Activated B cell treated with CpG ODN at 0.5 μM for 24 hours (primary cell): ENCODE measurements at regions of chr5 and their contacts with region 1.

Region 1: DNA sequence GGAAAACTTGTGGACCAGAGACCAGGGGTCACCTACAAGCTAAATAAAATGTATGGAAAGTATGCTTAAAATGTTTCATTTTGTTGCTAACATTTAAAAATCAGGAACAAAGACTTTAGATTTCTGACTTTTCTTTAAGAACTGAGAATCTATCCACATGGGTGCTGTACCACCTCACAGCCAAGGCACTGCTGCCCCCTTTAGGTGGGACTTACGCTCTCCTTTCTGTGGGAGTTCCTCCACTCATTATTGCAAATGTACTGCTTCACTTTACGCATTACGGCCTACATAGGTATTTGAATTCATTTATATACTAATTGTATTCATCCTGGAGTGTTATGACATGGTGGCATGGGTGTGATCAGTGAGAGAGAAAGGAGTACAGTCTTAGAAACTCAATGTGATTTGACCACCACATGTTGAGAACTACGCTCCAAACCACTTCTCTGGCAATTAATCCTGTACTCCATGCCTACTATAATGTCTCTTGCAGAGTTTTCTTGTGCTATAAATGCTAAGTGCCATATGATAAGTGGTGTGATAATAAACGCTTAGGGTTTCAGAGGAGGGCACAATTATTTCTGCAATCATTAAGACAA is 24.7 kb upstream of the CETN3 start:
- DNase-seq: no peak
- ATAC-seq: peak; percentile 66
- H3K4me3 Mint-ChIP-seq: no peak overlapping the region
- H3K27ac Mint-ChIP-seq: no peak overlapping the region
- H3K4me1 Mint-ChIP-seq: no peaks in the 10 kb centered on the region
- H3K27me3 Mint-ChIP-seq: peaks cover 5% of the 10 kb centered on the region
- CTCF ChIP-seq: no peak

Region 2: DNA sequence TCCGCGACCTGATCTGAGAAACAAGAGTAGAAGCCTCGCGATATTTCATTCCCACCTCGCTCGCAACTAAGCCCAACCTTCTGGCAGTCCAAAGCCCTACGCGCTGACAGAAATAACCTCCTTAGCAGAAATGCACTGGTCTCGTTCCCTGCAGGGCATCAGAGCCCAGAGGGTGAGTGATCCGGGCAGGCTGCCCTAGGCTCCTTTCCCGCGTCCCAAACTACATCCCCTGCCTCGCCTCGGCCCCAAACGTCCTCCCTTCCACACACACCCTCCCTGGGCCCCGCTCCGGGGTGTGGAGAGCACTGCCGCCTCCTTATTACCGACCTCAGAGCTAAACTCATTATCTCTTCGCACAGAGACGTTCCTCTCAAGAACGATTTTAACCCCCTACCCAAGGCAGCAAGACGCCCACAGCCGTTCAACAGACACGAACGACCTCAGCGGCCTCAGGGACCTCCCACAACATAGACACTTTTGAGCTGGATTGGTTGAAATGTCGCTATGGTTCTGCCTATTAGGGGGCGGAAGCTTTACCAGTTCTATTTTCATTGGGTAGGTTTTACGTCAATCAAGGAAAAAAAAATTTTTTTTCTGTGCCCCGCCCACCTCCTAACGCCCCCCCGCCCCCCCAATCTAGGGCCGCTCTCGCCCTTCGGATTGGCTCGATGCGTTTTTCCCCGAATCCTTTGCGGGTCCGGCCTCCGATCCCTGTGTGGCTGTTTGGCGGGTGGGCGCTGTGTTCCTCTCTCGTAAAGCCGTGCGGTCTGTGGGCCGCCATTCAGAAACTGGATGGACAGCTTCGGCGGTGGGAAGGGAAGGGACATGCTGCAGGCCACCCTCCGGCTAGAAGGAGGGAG is 24.7 kb before region 1 on chr5 and contains the start of gene CETN3:
- CTCF ChIA-PET with region 1: no interaction called
- POLR2A ChIA-PET with region 1: interaction called, 6 read pairs
- intact Hi-C with region 1: loop called (anchors 2 kb)
- DNase-seq: peak; percentile 79
- ATAC-seq: peak; percentile 93
- H3K4me3 Mint-ChIP-seq: no peak within 1 kb of the TSS
- H3K27ac Mint-ChIP-seq: no peak within 1 kb of the TSS
- H3K4me1 Mint-ChIP-seq: peaks cover 11% of the 10 kb centered on the region
- H3K27me3 Mint-ChIP-seq: no peaks in the 10 kb centered on the region
- CTCF ChIP-seq: no peak
- total RNA-seq, gene CETN3: 19.1 and 20.3 TPM in 2 replicates

Region 3: DNA sequence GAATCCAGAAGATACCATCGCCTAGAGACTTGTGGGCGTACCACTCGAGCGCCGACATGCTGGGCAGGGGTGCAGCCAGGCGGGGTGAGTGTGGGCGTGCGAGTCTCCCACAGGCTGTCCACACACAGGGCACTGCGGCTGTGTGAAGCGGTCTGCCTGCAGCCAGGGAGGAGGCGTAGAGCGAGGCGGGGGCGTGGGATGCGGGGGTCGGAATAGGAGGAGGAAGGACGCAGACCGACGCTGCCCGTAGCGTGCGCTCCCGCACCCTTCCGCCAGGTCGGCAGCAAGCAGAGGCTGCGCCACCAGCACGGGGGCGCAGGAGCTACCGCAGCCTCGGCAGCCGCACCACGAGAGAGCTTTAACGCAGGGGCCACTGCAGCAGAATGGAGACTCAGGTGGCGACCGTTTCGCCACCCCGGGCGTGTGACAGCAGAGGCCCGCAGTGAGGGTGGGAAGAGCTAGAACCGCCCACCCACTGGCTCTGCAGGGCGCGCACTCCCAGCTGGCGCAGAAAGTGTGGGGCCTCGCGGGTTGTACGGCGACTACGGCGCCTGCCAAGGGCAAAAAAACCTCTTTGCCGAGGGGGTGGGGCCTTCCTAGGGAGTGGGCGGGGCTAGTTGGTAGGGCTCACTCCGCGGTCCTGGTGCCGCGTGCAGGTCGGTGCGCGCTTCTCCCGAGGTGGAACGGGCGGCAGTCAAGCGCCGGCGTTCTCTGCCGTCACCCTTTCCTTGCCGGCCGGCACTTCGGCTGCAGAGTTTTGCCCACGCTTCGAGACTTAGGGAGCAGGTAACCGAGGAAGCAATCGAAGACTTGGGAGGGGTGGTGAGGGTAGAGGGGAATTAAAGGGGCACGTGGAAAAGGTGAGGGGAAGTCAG is 40.3 kb after region 1 on chr5 and contains the starts of genes MBLAC2 and POLR3G:
- CTCF ChIA-PET with region 1: interaction called, 3 read pairs
- POLR2A ChIA-PET with region 1: interaction called, 4 read pairs
- intact Hi-C with region 1: loop called (anchors 1 kb)
- DNase-seq: peak; percentile 86
- ATAC-seq: peak; percentile 91
- H3K4me3 Mint-ChIP-seq: peak within 1 kb of the TSS; percentile 98
- H3K27ac Mint-ChIP-seq: peak within 1 kb of the TSS; percentile 93
- H3K4me1 Mint-ChIP-seq: peaks cover 27% of the 10 kb centered on the region
- H3K27me3 Mint-ChIP-seq: no peaks in the 10 kb centered on the region
- CTCF ChIP-seq: no peak
- total RNA-seq, gene MBLAC2: 6.4 and 7.3 TPM in 2 replicates
- total RNA-seq, gene POLR3G: 2.9 and 3.1 TPM in 2 replicates

Region 4: DNA sequence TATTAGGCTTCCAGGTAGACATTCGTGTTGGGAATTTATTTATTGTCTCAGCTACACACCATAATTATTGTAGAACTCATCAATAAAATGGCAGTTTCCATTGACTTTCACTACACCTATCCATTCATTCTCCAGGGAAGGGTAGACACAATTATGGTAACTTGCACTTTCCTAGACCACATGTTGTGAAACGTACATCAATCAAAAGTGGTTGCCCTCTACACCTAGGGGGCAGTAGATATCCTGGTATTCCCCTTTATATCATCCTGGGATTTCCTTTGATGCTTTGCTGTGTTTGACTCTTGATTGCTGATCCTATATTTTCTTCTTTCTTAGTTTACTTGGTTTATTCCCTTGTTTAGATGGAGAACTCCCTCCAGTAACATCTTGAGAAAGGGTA is 172.3 kb after region 1 on chr5:
- CTCF ChIA-PET with region 1: no interaction called
- POLR2A ChIA-PET with region 1: no interaction called
- intact Hi-C with region 1: loop called (anchors 1 kb)
- DNase-seq: no peak
- ATAC-seq: no peak
- H3K4me3 Mint-ChIP-seq: no peak overlapping the region
- H3K27ac Mint-ChIP-seq: no peak overlapping the region
- H3K4me1 Mint-ChIP-seq: no peaks in the 10 kb centered on the region
- H3K27me3 Mint-ChIP-seq: peaks cover 5% of the 10 kb centered on the region
- CTCF ChIP-seq: no peak

Region 5: DNA sequence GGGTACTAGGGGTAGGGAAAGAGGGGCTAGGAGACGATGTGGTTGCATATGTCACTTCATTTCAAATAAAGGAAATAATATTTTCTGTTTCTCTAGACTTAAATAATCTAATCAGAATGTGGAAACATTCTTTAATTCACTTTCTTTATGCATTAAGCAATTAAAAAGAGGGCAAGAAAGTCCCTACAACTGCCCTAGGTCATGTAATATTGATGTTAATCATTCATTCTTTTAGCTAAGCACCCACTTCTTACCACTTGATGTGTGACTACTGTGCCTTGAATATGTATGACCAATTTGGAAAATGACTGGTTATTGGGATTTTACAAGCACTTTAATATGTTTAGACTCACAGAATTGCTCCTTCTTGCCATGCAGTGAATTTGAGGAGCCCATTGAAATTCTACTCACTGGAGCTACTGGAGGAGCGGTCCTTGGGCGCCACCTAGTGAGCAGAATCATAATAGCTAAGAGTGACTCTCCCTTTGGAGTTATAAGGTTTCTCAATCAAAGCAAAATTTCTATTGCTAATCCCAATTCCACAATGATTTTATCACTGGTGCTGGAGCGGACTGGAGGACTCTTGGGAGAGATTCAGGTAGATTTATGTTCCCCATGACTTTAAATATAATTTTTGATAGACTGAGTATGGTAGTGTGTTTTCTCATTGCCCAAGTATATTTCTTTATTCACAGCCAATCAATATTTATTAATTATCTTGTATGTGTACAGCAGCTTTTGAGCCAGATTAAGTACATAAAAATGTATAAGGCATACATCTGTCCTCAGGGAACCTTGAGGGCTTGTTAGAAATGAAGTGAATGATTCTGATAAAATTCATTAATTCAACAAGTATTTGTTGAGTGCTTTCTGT is 349.5 kb after region 1 on chr5:
- CTCF ChIA-PET with region 1: interaction called, 44 read pairs
- POLR2A ChIA-PET with region 1: no interaction called
- intact Hi-C with region 1: loop called (anchors 1 kb)
- DNase-seq: peak; percentile 25
- ATAC-seq: peak; percentile 68
- H3K4me3 Mint-ChIP-seq: no peak overlapping the region
- H3K27ac Mint-ChIP-seq: no peak overlapping the region
- H3K4me1 Mint-ChIP-seq: no peaks in the 10 kb centered on the region
- H3K27me3 Mint-ChIP-seq: peaks cover 7% of the 10 kb centered on the region
- CTCF ChIP-seq: peak; percentile 71